ENCODE measurements at regions of chr19 and their contacts with region 1.

Region 1: DNA sequence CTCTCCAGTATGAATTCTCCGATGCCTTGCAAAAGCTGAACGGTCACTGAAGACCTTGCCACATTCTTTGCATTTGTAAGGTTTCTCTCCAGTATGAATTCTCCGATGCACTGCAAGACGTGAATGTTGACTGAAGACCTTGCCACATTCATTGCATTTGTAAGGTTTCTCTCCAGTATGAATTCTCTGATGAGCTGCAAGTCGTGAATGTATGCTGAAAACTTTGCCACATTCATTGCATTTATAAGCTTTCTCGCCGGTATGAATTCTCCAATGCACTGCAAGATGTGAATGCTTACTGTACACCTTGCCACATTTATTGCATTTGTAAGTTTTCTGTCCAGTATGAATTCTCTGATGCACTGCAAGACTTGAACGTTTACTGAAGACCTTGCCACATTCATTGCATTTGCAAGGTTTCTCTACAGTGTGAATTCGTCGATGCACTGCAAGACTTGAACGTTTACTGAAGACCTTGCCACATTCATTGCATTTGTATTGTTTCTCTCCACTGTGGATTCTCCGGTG is 20.0 kb upstream of the ZNF841 start:
- DNase-seq: no peak
- H3K4me3 ChIP-seq: no peak overlapping the region
- H3K27ac ChIP-seq: no peak overlapping the region
- H3K4me1 ChIP-seq: no peaks in the 10 kb centered on the region
- H3K27me3 ChIP-seq: no peaks in the 10 kb centered on the region
- CTCF ChIP-seq: no peak
- POLR2A ChIP-seq: no peak

Region 2: DNA sequence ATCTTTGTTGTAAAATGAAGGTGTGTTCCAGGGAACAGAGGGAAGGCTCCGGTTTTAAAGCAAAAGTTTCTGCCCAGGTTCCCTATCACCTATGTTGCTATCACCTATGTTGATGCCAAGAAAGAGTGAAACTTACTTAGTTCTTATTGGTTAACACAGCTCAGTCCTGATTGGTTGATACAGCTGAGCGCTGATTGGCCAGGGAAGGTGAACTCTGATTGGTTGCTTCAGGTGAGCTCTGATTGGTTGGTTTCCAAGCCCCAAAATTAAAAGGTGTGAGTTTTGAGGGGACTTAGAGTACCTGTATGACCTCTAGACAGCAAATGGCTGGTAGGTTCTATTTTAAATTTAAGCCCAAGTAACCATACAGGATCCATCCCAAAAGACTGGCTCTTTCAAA is 278.4 kb before region 1 on chr19:
- intact Hi-C with region 1: no loop called
- DNase-seq: no peak
- H3K4me3 ChIP-seq: no peak overlapping the region
- H3K27ac ChIP-seq: no peak overlapping the region
- H3K4me1 ChIP-seq: no peaks in the 10 kb centered on the region
- H3K27me3 ChIP-seq: no peaks in the 10 kb centered on the region
- CTCF ChIP-seq: no peak
- POLR2A ChIP-seq: no peak

Region 3: DNA sequence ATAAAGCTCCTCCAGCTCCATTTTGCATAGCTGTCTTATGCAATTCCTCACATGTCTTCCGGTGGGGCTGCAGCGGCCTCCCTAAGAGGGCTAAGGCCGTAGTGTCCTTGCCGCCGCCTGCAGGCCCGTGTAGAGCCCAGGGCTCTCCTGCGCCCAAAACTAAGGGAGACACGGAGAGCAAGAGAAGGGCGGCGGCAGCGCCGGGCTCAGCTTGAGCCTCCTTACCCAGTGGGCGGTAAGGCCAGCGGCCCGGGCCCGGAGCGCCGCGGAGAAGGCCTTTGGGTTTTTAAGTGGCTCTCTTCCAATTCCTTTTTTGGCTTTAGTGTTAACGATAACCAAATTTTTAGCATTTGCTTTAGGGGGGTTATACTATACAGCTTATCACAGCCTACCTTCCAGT is 1109.0 kb after region 1 on chr19:
- intact Hi-C with region 1: loop called (anchors 10 kb)
- DNase-seq: no peak
- H3K4me3 ChIP-seq: no peak overlapping the region
- H3K27ac ChIP-seq: no peak overlapping the region
- H3K4me1 ChIP-seq: no peaks in the 10 kb centered on the region
- H3K27me3 ChIP-seq: no peaks in the 10 kb centered on the region
- CTCF ChIP-seq: no peak
- POLR2A ChIP-seq: no peak

Measured in thyroid gland (tissue), 4 donors.